Right ventricle myocardium inferior (tissue), 1 donor: ENCODE measurements at regions of chr12 and their contacts with region 1.

Region 1: DNA sequence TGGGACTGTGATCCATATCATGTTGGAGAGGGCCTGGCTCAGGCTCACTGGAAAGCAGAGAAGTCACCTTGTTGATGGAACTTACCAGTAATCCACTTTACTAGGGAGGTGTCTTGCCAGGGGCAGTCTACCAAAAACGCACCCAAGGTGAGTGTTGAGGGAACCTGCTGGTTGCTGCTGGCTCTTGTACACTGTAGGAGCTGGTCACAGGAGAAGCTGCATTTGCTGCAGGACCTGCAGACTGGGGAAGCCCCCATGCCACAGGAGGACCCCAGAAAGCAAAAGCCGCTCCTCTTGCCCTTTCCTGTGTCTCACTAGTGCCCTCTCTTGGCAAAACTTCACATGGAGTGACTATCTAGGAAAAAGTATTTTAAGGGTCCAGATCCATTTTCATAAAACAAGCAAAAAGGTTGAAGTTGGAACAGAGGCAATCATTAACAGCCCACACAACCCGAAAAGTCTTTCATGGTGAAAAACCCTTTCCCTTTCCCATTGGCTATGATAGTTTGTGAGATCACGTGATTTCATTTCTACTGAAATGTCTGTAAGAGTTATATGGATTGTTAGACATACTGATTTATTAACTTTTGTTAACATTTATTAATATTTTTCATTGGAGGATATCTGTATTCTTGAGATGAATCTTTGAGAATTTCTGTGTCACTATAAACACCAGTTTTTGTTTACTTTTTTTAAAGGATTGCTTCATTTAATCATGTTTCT is 59.2 kb downstream of the RASSF8 start:
- DNase-seq: no peak
- ATAC-seq: peak; percentile 28

Region 2: GRCh38 chr12:25929142-25929541 is 88.5 kb before region 1 on chr12:
- intact Hi-C with region 1: no loop called
- DNase-seq: no peak
- ATAC-seq: no peak

Region 3: DNA sequence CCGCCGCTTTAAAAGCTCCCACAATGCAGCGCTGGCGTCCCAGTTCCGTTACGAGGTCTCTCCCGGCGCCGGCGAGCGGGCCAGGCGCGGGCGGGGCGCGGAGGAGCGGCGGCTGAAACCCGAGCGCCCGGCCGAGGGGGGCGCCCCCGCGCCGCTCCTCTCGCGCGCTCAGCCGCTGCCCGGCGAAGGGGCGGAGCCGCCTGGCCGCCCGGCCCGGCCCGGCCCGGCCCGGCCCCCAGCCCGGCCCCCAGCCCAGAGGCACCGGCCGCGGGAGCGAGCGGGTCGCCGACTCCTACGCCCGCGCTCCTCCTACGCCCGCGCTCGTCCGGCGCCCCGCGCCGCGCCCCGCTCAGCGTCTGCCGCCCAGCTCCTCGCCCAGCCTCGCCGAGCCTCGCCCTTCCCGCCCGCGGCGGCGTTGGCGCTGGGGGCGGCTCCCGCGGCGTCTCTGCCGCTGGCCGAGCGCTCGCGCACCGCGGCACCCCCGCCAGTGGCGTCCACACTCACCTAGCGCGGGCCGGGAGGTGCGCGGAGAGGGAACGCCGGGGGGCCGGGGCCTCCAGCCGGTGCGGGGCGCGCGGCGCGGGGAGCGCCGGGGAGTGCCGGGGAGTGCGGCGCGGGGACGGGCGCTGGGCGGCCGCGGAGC is 59.1 kb before region 1 on chr12 and contains the start of gene RASSF8:
- intact Hi-C with region 1: loop called (anchors 2 kb)
- DNase-seq: peak; percentile 87
- ATAC-seq: peak; percentile 96
- total RNA-seq, gene RASSF8: 26.2 TPM